Left ventricle myocardium inferior (tissue), 1 donor: ENCODE measurements at regions of chr6 and their contacts with region 1.

Region 1: GRCh38 chr6:127446356-127446755 is 12.8 kb downstream of the KIAA0408 start:
- DNase-seq: no peak
- H3K4me3 ChIP-seq: no peak overlapping the region
- H3K27ac ChIP-seq: no peak overlapping the region
- H3K4me1 ChIP-seq: no peaks in the 10 kb centered on the region
- H3K27me3 ChIP-seq: no peaks in the 10 kb centered on the region
- CTCF ChIP-seq: no peak

Region 2: DNA sequence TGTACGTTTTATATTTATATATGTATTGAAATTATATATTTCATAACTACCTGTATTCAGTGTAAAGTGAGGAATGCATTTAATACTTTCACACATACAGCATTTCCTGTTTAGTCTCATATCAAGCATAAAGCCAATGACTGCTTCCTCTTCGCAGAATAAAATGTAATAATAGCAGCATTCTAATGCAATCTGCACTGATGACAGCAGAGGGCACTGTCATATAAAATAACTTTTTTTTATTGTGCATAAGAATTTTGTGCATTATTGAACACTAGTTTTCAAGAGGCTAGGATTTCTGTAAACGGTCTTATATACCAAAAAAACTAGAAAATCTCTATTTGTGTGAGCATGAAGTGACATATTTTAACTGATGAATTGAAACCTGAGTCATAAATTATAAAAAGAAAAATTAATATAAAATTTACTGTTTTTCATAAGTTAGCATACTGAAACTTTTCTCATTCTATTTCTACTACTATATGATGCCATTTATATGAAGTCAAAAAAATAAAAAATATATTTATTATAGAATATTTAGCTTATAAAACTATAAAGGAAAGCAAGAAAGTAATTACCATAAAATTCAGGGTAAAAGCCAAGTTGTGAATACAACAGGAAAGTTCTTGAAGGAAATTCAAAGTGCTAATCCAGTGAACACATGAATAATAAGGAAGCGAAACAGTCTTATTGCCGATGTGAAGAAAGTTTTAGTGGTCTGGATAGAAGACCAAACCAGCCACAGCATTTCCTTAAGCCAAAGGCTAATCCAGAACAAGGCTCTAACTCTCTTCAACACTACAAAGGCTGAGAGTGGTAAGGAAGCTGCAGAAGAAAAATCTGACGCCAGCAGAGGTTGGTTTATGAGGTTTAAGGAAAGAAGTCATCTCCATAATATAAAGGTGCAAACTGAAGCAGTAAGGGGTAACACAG is 143.4 kb before region 1 on chr6:
- intact Hi-C with region 1: loop called (anchors 10 kb)
- DNase-seq: no peak
- H3K4me3 ChIP-seq: no peak overlapping the region
- H3K27ac ChIP-seq: no peak overlapping the region
- H3K4me1 ChIP-seq: peaks cover 33% of the 10 kb centered on the region
- H3K27me3 ChIP-seq: no peaks in the 10 kb centered on the region
- CTCF ChIP-seq: peak; percentile 79